A673 (cell line): ENCODE measurements at regions of chr21 and their contacts with region 1.

Region 1: GRCh38 chr21:32403201-32403777 is 9.2 kb upstream of the EVA1C start:
- DNase-seq: peak; percentile 87
- H3K4me3 ChIP-seq: no peak overlapping the region
- H3K27ac ChIP-seq: no peak overlapping the region
- H3K4me1 ChIP-seq: no peaks in the 10 kb centered on the region
- H3K27me3 ChIP-seq: peaks cover 3% of the 10 kb centered on the region
- CTCF ChIP-seq: peak; percentile 81

Region 2: GRCh38 chr21:32371913-32372314 is 31.4 kb before region 1 on chr21:
- CTCF ChIA-PET with region 1: interaction called, 14 read pairs
- POLR2A ChIA-PET with region 1: no interaction called
- intact Hi-C with region 1: no loop called
- DNase-seq: no peak
- H3K4me3 ChIP-seq: no peak overlapping the region
- H3K27ac ChIP-seq: no peak overlapping the region
- H3K4me1 ChIP-seq: no peaks in the 10 kb centered on the region
- H3K27me3 ChIP-seq: no peaks in the 10 kb centered on the region
- CTCF ChIP-seq: no peak

Region 3: DNA sequence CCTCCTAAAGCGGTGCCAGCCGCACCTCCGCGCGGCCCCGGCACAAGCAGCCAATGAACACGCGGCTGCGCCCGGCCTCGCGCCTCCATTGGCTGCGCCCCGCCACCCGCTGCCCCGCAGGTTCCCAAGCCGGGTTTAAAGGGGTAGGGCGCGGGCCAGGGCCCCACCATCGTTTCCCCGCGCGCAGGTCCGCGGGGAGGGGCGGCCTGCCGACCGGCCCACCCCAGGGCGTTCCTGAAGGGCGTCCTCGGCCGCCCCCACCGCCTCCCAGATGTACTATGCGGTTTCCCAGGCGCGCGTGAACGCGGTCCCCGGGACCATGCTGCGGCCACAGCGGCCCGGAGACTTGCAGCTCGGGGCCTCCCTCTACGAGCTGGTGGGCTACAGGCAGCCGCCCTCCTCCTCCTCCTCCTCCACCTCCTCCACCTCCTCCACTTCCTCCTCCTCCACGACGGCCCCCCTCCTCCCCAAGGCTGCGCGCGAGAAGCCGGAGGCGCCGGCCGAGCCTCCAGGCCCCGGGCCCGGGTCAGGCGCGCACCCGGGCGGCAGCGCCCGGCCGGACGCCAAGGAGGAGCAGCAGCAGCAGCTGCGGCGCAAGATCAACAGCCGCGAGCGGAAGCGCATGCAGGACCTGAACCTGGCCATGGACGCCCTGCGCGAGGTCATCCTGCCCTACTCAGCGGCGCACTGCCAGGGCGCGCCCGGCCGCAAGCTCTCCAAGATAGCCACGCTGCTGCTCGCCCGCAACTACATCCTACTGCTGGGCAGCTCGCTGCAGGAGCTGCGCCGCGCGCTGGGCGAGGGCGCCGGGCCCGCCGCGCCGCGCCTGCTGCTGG is 666.9 kb after region 1 on chr21 and contains the start of gene OLIG1:
- CTCF ChIA-PET with region 1: no interaction called
- POLR2A ChIA-PET with region 1: no interaction called
- intact Hi-C with region 1: no loop called
- DNase-seq: peak; percentile 17
- H3K4me3 ChIP-seq: no peak within 1 kb of the TSS
- H3K27ac ChIP-seq: no peak within 1 kb of the TSS
- H3K4me1 ChIP-seq: no peaks in the 10 kb centered on the region
- H3K27me3 ChIP-seq: peaks cover 99% of the 10 kb centered on the region
- CTCF ChIP-seq: no peak
- total RNA-seq, gene OLIG1: not detected in 2 replicates